ENCODE measurements at regions of chr12 and their contacts with region 1.

Region 1: DNA sequence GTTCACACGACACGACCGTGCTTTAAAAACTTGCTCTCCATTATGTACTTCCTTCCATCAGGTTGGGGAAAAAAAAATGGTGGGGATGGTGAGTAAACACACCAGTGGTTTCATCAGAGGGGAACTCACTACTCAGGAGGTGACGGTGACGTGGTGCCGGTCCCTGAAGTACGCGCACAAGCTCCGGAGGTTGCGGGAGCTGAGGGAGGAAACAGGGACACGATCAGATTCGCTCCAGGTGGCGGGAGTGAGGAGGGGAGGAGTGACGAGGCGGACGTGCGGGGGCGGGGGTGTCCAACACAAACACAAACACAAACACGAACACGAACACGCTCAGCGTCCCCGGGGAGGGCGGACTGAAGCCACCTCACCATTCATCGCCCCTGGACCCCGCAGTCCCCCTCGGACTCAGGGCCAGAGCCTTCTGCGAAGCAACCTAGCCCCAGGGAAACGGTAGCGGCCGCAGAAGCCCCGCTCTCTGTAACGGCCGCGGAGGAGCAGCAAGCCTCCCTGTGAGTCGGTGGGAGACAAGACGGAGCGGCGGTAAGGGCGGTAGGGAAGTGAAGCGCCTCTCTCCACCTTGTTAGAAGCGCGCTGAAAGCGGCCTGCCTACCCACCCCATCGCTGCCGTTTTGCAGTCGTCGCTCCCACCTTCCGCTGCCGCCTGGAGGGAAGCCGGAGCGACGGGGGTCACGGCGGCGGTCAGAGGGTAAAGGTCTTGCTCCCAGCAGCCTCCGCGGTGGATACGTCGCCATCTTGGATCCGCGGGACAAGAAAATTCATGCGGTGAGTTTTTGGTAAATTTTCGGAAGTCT is at the start of gene CNOT2:
- DNase-seq: peak; percentile 95
- ATAC-seq: peak; percentile 83
- H3K4me3 Mint-ChIP-seq: peak within 1 kb of the TSS; percentile 94
- H3K27ac Mint-ChIP-seq: peak within 1 kb of the TSS; percentile 100
- H3K4me1 Mint-ChIP-seq: peaks cover 57% of the 10 kb centered on the region
- H3K27me3 Mint-ChIP-seq: no peaks in the 10 kb centered on the region
- total RNA-seq, gene CNOT2: 63.3 to 77.7 TPM

Region 2: GRCh38 chr12:69173368-69173767 is 1069.5 kb before region 1 on chr12:
- CTCF ChIA-PET with region 1: no interaction called
- POLR2A ChIA-PET with region 1: interaction called, 15 read pairs
- intact Hi-C with region 1: no loop called
- DNase-seq: no peak
- ATAC-seq: no peak
- H3K4me3 Mint-ChIP-seq: no peak overlapping the region
- H3K27ac Mint-ChIP-seq: no peak overlapping the region
- H3K4me1 Mint-ChIP-seq: peaks cover 4% of the 10 kb centered on the region
- H3K27me3 Mint-ChIP-seq: peaks cover 2% of the 10 kb centered on the region

Region 3: DNA sequence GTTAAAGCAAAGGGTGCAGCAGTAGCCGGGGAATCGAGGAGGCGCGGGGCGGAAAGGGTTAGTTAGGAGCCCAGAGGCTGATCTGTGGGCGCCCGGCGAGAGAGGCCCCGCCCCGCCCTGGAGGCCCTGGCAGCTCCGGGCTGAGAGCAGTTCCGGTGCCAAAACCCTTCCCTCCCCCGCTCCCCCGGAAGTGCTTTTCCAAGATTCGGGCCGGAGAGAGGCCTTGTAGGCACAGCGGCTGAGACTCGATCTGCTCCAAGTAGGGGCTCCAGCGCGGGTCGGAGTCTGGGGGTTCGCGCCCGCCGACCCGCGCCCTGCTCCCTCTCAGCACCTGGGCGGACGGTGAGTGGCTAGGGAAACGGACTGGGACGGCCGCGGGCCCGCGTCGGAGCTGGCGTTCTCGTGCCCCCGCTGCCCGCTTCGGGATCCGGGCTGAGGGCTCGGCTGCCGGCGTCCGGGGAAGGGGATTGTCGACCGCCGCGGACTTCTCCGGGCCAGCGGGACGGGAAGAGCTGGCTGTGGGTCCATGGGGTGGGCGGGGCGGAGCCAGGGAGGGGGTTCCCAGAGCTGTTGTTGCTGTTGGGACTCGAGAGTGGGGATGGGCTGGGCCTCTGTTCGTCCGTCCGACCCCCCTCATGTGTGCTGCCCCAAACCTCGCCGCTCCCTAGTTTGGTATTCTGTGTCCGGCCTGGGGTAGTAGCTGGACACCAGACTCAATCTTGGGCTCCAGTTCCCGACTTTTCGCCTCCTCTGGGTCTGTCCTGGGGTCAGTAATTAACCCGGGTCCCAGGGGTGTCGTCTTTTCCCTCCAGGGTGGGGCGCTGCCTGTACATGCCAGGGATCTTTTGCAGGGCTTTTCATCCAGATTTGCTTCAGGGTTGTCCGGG is 772.5 kb before region 1 on chr12 and contains the start of gene FRS2:
- CTCF ChIA-PET with region 1: no interaction called
- POLR2A ChIA-PET with region 1: no interaction called
- intact Hi-C with region 1: loop called in 1 of 2 experiments (anchors 10 kb)
- DNase-seq: peak; percentile 93
- ATAC-seq: peak; percentile 99
- H3K4me3 Mint-ChIP-seq: peak within 1 kb of the TSS; percentile 92
- H3K27ac Mint-ChIP-seq: peak within 1 kb of the TSS; percentile 99
- H3K4me1 Mint-ChIP-seq: peaks cover 52% of the 10 kb centered on the region
- H3K27me3 Mint-ChIP-seq: no peaks in the 10 kb centered on the region
- total RNA-seq, gene FRS2: 9.5 to 10.4 TPM

Region 4: DNA sequence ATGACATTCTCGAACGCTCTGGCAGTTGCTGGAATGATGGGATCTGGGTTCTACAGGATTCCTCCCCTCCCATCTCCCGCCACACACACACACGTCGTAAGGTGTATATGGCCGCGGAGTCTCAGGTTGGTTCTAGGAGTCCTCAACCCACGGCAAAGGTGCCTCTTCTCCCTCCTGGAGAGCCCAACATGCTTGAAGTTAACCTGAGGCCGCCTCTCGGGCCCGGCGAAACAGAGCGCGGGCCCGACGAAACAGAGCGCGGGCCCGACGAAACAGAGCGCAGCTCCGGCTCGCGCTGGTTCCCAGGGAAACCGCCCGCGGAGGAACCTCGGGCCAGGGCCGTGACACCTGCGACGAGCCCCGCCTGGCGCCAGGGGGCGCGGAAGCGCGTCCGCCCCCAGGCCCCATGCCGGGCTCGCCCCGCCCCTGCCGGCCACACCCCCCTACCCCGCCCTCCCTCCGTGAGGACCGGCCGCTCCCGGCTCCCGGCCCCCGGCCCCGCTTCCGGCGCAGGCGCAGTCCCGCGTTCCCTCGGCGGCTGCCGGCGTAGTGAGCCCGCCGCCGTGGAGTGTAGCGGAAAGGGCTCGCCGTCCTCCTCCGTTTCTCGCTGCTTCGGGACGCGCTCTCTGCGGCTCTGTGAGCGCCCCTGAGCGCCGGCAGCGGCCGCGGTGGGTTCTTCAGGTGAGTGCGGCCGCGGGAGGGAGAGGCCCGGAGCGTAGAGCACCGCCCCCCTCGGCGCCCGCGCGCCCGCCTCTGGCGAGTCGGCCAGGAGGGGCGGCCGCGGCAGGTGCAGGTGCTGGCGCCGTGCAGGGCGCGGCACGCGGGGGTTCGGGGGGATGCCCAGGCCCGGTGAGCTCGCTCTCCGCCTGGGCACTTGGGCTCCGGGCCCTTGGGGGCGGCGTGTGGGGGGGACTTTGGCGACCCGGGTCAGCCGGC is 504.3 kb before region 1 on chr12 and contains the start of gene RAB3IP:
- CTCF ChIA-PET with region 1: no interaction called
- POLR2A ChIA-PET with region 1: no interaction called
- intact Hi-C with region 1: loop called in 1 of 2 experiments (anchors 1 kb)
- DNase-seq: peak; percentile 97
- ATAC-seq: peak; percentile 88
- H3K4me3 Mint-ChIP-seq: peak within 1 kb of the TSS; percentile 79
- H3K27ac Mint-ChIP-seq: peak within 1 kb of the TSS; percentile 75
- H3K4me1 Mint-ChIP-seq: peaks cover 26% of the 10 kb centered on the region
- H3K27me3 Mint-ChIP-seq: peaks cover 10% of the 10 kb centered on the region
- total RNA-seq, gene RAB3IP: 30.7 to 39.9 TPM

Region 5: GRCh38 chr12:69966409-69967207 is 276.3 kb before region 1 on chr12:
- CTCF ChIA-PET with region 1: no interaction called
- POLR2A ChIA-PET with region 1: no interaction called
- intact Hi-C with region 1: no loop called
- DNase-seq: no peak
- ATAC-seq: no peak
- H3K4me3 Mint-ChIP-seq: no peak overlapping the region
- H3K27ac Mint-ChIP-seq: no peak overlapping the region
- H3K4me1 Mint-ChIP-seq: no peaks in the 10 kb centered on the region
- H3K27me3 Mint-ChIP-seq: no peaks in the 10 kb centered on the region

Region 6: GRCh38 chr12:70002097-70002911 is 240.6 kb before region 1 on chr12:
- CTCF ChIA-PET with region 1: no interaction called
- POLR2A ChIA-PET with region 1: no interaction called
- intact Hi-C with region 1: no loop called
- DNase-seq: no peak
- ATAC-seq: no peak
- H3K4me3 Mint-ChIP-seq: no peak overlapping the region
- H3K27ac Mint-ChIP-seq: no peak overlapping the region
- H3K4me1 Mint-ChIP-seq: no peaks in the 10 kb centered on the region
- H3K27me3 Mint-ChIP-seq: peaks cover 2% of the 10 kb centered on the region

Region 7: DNA sequence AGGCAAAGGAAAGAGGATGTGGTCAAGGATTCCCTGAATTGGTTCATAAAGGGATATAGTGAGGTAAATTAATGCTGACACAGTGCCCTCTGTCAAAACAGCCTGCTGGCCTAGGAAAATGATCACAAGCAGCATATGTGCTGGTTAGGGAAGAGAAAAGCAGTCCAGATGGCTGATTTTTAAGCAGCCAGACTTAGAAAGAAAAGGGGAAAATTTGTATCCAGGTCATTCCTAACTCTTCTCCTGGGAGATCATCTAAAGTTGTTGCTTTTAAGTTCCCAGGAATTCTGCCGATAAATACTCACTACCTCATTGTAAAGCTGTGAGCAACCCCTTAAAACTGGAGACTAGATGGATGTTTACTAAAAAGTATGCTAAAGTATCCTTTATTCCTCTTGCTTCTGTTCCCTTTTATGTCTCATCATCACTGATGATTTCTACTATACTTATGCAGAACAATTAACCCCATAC is 46.1 kb before region 1 on chr12:
- CTCF ChIA-PET with region 1: no interaction called
- POLR2A ChIA-PET with region 1: no interaction called
- intact Hi-C with region 1: no loop called
- DNase-seq: no peak
- ATAC-seq: no peak
- H3K4me3 Mint-ChIP-seq: no peak overlapping the region
- H3K27ac Mint-ChIP-seq: no peak overlapping the region
- H3K4me1 Mint-ChIP-seq: no peaks in the 10 kb centered on the region
- H3K27me3 Mint-ChIP-seq: no peaks in the 10 kb centered on the region

Region 8: GRCh38 chr12:70217416-70217815 is 25.5 kb before region 1 on chr12:
- CTCF ChIA-PET with region 1: no interaction called
- POLR2A ChIA-PET with region 1: no interaction called
- intact Hi-C with region 1: no loop called
- DNase-seq: no peak
- ATAC-seq: no peak
- H3K4me3 Mint-ChIP-seq: no peak overlapping the region
- H3K27ac Mint-ChIP-seq: no peak overlapping the region
- H3K4me1 Mint-ChIP-seq: peaks cover 2% of the 10 kb centered on the region
- H3K27me3 Mint-ChIP-seq: no peaks in the 10 kb centered on the region

Region 9: DNA sequence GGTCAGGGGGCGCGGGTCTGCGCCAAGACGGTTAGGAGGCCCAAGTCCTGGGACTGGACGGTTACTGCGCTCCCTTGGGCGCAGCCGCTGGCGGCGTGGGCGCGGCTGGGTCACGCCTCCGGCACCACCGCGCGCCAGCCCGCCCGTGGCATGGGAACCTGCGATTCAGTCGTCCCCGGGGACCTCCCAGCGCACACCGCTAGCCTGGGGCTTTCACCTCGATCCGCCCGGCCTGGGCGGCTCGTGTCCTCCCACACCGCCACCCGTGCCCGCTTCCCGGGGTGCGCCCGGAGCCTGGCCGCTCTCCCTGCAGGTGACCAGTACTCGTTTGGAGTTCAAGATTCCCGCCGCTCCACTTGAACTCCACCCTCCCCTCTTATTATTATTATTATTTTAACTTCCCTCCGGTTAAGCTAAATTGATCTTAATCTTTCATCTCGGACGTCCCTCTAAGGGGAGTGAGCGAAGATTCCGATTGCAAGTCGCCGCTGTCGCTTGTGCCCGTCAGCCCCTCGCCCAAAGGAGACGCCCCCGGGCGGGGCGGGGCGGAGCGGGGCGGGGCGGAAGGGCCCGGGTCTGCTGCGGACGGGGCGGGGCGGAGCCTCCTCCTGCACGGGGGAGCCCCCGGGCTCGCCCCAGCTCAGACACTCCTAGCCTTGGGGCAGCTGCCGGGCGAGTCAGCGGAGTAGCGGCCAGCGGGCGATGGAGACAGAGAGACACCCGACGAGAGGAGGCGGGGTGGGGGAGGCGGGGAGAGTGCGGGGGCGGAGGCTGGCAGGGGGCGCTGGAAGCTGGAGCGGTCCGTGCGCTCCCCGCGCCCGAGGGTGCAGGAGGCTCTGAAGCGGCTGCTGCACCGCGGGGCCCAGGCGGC is 123.0 kb after region 1 on chr12 and contains the start of gene KCNMB4:
- CTCF ChIA-PET with region 1: interaction called, 3 read pairs
- POLR2A ChIA-PET with region 1: no interaction called
- intact Hi-C with region 1: loop called (anchors 1 kb)
- DNase-seq: peak; percentile 88
- ATAC-seq: peak; percentile 91
- H3K4me3 Mint-ChIP-seq: peak within 1 kb of the TSS; percentile 86
- H3K27ac Mint-ChIP-seq: peak within 1 kb of the TSS; percentile 34
- H3K4me1 Mint-ChIP-seq: peaks cover 17% of the 10 kb centered on the region
- H3K27me3 Mint-ChIP-seq: peaks cover 6% of the 10 kb centered on the region
- total RNA-seq, gene KCNMB4: 0.94 to 2.1 TPM

Region 10: GRCh38 chr12:71754461-71755145 is 1511.7 kb after region 1 on chr12 and contains the start of gene RAB21:
- CTCF ChIA-PET with region 1: interaction called, 3 read pairs
- POLR2A ChIA-PET with region 1: no interaction called
- intact Hi-C with region 1: loop called in 1 of 2 experiments (anchors 1 kb)
- DNase-seq: peak; percentile 100
- ATAC-seq: peak; percentile 92
- H3K4me3 Mint-ChIP-seq: peak within 1 kb of the TSS; percentile 94
- H3K27ac Mint-ChIP-seq: peak within 1 kb of the TSS; percentile 99
- H3K4me1 Mint-ChIP-seq: peaks cover 35% of the 10 kb centered on the region
- H3K27me3 Mint-ChIP-seq: peaks cover 9% of the 10 kb centered on the region
- total RNA-seq, gene RAB21: 88.9 to 98.9 TPM

Measured in activated CD4-positive, alpha-beta T cell treated with anti-CD3 and anti-CD28 coated beads for 36 hours (primary cell).